ENCODE measurements at regions of chr10 and their contacts with region 1.

Region 1: GRCh38 chr10:31490858-31491504 is 172.0 kb downstream of the ZEB1 start:
- DNase-seq: no peak
- ATAC-seq: peak; percentile 76
- H3K4me3 Mint-ChIP-seq: no peak overlapping the region
- H3K27ac Mint-ChIP-seq: no peak overlapping the region
- H3K4me1 Mint-ChIP-seq: peaks cover 6% of the 10 kb centered on the region
- H3K27me3 Mint-ChIP-seq: no peaks in the 10 kb centered on the region; the same call in 1 of the 2 replicates
- CTCF ChIP-seq: peak; percentile 36; the same call in 1 of the 2 replicates

Region 2: DNA sequence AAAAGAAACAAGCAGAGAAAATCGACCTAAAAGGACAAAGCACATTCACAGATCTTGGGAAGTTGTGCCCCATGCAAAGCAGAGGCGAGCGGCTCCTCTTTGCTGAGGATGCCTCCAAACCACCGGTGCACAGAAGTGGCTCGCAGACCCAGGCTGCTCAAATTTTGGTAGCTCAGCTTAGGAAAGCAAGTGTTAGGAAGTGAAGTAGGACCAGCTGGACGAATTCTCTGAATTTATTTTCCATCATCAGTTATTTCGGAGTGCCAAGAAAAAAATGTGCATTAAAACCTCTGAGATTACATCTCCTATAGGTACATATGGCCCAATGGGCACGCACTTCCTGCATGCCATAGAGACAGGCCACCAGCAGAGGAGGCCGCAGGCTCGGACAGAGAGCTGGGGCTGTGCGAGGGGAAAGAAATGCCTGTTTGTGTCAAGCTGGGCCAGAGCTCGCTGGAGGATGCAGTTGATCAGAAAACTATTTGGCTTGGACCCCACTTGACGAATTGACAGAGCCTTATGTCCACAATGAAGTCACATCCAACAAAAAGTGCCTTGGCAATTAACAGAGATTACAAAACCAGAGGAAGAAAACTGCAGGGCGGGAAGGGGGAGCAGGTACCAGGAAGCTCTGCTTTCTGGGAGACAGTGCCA is 739.2 kb before region 1 on chr10:
- CTCF ChIA-PET with region 1: interaction called, 33 read pairs
- POLR2A ChIA-PET with region 1: no interaction called
- DNase-seq: peak; percentile 80
- ATAC-seq: peak; percentile 98
- H3K4me3 Mint-ChIP-seq: no peak overlapping the region
- H3K27ac Mint-ChIP-seq: no peak overlapping the region
- H3K4me1 Mint-ChIP-seq: peaks cover 5% of the 10 kb centered on the region
- H3K27me3 Mint-ChIP-seq: no peaks in the 10 kb centered on the region; the same call in none of the 2 replicates
- CTCF ChIP-seq: peak; percentile 67

Region 3: DNA sequence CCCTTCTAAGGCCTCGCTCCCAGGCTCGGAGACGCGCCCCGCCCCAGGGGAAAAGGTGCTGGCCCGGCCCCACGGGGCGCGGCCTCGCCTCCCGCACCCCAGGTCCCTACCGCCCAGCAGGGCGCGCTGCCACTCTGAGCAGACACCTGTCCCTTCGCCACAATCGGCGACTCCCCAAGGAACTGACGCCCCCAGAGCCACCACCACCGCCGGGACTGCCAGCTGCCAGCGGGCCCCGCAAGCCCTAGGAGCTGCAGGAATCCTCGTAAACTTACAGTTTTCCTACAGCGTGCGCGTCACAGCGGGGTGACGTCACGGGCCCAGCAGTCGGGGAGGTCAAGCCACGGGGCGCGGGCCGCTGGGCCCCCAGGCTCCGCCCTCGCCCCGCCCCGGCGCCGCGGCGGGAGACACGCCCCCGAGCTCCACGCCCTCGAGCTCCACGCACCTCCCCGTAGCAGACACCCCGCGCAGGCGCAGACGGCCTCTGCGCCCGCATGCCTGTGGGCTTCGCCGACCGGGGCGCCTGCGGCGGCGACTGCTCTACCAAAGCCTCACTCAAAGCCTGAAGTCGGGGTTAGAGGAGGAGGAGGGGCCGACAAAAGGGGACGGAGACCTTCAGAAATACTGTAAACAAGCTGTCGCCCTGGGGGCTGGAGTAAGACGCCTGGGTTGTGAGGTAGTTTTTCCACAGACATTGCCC is 459.3 kb before region 1 on chr10 and contains the start of gene ZNF438:
- CTCF ChIA-PET with region 1: interaction called, 10 read pairs
- POLR2A ChIA-PET with region 1: no interaction called
- DNase-seq: peak; percentile 88
- ATAC-seq: peak; percentile 68
- H3K4me3 Mint-ChIP-seq: peak within 1 kb of the TSS; percentile 72
- H3K27ac Mint-ChIP-seq: peak within 1 kb of the TSS; percentile 94
- H3K4me1 Mint-ChIP-seq: peaks cover 53% of the 10 kb centered on the region
- H3K27me3 Mint-ChIP-seq: peaks cover 39% of the 10 kb centered on the region
- CTCF ChIP-seq: no peak
- total RNA-seq, gene ZNF438: 1.6 to 1.9 TPM (median 1.6 TPM) in 3 replicates

Region 4: DNA sequence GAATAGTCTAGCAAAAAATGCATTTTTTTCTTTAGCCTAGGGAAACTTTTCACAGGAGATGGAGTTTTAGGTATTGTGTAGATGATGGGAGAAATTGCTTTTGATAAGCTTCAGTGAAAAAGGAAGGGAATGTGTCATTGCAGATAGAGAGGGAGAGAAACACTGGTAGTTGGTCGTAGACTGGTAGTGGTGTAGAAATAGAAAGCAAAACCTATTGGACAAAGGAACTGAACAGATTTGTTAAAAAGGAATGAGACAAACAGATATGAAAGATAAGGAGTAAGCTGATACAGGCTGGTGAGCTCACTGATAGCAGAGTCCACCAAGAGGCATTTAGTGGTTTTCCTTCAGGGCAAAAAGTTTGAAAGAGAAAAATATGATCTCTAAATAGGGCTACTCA is 77.7 kb before region 1 on chr10:
- CTCF ChIA-PET with region 1: no interaction called
- POLR2A ChIA-PET with region 1: no interaction called
- DNase-seq: no peak
- ATAC-seq: no peak
- H3K4me3 Mint-ChIP-seq: no peak overlapping the region
- H3K27ac Mint-ChIP-seq: no peak overlapping the region
- H3K4me1 Mint-ChIP-seq: no peaks in the 10 kb centered on the region
- H3K27me3 Mint-ChIP-seq: no peaks in the 10 kb centered on the region
- CTCF ChIP-seq: no peak

Region 5: GRCh38 chr10:31467796-31468535 is 23.0 kb before region 1 on chr10:
- CTCF ChIA-PET with region 1: interaction called, 18 read pairs
- POLR2A ChIA-PET with region 1: no interaction called
- DNase-seq: peak; percentile 61
- ATAC-seq: peak; percentile 100
- H3K4me3 Mint-ChIP-seq: no peak overlapping the region
- H3K27ac Mint-ChIP-seq: no peak overlapping the region
- H3K4me1 Mint-ChIP-seq: peaks cover 8% of the 10 kb centered on the region
- H3K27me3 Mint-ChIP-seq: no peaks in the 10 kb centered on the region; the same call in 1 of the 2 replicates
- CTCF ChIP-seq: peak; percentile 77

Region 6: GRCh38 chr10:31620226-31621151 is 129.5 kb after region 1 on chr10:
- CTCF ChIA-PET with region 1: interaction called, 13 read pairs
- POLR2A ChIA-PET with region 1: no interaction called
- DNase-seq: peak; percentile 80
- ATAC-seq: peak; percentile 79
- H3K4me3 Mint-ChIP-seq: no peak overlapping the region
- H3K27ac Mint-ChIP-seq: no peak overlapping the region
- H3K4me1 Mint-ChIP-seq: peaks cover 13% of the 10 kb centered on the region
- H3K27me3 Mint-ChIP-seq: no peaks in the 10 kb centered on the region; the same call in 1 of the 2 replicates
- CTCF ChIP-seq: peak; percentile 44

Measured in WTC11 (cell line).